Activated CD8-positive, alpha-beta T cell treated with anti-CD3 and anti-CD28 coated beads, Interleukin-2, amount 10 ng/mL, durations not matched to agents 7 days and 5 days (primary cell): ENCODE measurements at regions of chr2 and their contacts with region 1.

Region 1: DNA sequence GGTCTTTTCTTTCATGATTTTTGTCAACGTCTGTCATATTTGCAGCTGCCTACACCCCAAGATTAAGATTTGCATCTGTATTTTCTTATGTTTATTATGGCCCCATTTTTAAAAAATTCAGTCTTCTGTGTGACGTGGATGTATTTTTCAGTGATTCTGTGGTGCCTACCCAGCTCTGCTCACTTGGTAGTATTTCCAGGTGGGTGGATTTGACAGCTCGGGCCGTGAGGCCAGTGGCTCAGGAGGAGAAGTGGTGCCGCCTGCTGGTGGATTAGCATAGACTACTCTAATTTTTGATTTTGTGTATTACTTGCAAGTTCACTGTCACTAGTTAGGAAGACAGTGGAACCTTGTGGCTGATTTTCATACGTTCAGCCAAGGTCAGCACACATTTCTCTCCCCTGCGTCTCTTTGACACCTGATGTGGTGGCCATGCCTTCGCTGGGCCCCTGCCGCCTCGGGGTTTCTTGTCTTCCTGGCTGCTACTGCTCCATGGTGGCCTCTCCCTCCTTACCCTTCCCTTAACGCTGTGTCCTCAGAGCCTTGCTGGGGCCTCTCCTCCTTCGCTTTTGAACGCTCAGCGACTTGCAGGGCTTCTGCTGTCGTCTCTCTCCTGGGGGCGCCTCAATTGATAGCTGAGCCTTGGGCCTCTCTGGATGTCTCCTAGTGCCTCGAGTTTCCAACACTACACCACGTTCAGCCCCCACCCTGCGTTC is 89.3 kb downstream of the DGKD start:
- DNase-seq: peak; percentile 91
- ATAC-seq: peak; percentile 80
- H3K4me3 Mint-ChIP-seq: no peak overlapping the region
- H3K27ac Mint-ChIP-seq: peak overlapping the region; percentile 56
- H3K4me1 Mint-ChIP-seq: peaks cover 33% of the 10 kb centered on the region
- H3K27me3 Mint-ChIP-seq: no peaks in the 10 kb centered on the region

Region 2: DNA sequence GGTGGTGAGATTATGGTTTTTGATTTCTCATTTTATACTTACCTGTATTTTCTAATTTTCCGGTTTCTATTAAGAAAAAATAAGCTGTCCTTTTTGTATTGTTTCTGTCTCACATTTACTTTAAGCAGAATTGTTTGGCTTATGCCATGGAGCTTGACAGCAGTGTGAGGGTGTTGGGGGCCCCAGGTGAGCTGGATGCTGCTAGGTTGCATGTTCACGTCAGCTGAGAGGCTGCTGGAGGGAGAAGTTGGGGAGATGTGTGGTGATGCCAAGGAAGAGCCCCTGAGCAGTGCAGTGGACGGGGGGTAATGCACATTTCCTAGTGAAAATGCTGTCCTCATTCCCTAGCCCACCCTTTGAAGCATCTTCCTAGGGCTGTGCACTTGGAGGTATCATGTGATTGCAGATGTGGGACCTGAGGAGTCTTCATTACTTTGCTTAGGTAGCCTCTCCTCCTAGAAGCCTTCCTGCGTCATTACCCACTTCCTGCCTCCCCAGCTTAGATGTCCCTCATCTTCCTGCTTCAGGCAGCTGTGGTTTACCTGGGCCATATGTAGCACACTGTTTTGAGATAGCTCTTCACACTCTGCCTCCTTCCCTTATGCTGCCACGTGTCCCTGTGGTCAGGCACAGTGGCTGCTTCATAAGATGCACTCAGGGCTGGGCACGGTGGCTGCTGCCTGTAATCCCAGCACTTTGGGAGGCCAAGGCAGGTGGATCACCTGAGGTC is 175.9 kb before region 1 on chr2:
- CTCF ChIA-PET with region 1: interaction called, 18 read pairs
- POLR2A ChIA-PET with region 1: no interaction called
- DNase-seq: peak; percentile 95
- ATAC-seq: peak; percentile 97
- H3K4me3 Mint-ChIP-seq: peak overlapping the region; percentile 65
- H3K27ac Mint-ChIP-seq: peak overlapping the region; percentile 92
- H3K4me1 Mint-ChIP-seq: peaks cover 70% of the 10 kb centered on the region
- H3K27me3 Mint-ChIP-seq: no peaks in the 10 kb centered on the region

Region 3: DNA sequence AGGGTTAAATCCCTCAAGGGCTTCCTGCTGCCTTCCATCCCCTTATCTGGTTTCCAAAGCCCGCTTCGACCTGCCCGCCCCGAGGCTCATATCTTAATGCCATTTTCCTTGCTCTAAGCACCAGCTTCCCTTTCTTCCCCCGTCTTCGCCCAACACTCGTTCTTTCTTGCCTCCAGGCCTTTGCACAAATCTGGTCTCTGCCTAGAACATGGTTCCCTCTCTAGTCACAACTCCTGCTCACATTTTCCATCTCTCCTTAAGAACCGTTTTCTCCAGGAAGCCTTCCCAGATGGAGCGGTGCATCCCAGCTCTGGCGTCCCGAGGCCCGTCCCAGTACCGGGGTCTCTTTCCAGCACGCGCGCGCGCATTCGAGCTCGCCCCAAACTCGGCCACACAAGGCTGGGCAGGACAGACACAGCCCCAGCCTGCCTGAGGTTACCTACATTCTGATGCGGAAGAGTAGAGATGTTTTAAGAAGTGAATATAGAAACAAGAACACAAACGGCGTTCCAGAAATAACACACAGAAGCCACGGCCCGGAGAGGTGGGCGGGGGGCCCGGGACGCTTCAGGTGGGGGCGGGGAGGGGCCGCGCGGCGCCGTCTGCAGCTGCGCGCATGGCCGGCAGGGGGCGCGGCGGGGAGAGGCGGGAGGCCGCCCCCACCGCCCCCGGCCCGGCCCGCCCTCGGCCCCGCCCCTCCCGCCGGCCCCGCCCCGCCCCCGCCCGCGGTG is 89.7 kb before region 1 on chr2 and contains the start of gene DGKD:
- CTCF ChIA-PET with region 1: interaction called, 16 read pairs
- POLR2A ChIA-PET with region 1: interaction called, 3 read pairs
- DNase-seq: peak; percentile 79
- ATAC-seq: peak; percentile 76
- H3K4me3 Mint-ChIP-seq: peak within 1 kb of the TSS; percentile 85
- H3K27ac Mint-ChIP-seq: peak within 1 kb of the TSS; percentile 94
- H3K4me1 Mint-ChIP-seq: peaks cover 82% of the 10 kb centered on the region
- H3K27me3 Mint-ChIP-seq: no peaks in the 10 kb centered on the region
- total RNA-seq, gene DGKD: 92.1 to 94.2 TPM

Region 4: GRCh38 chr2:233409286-233409991 is 34.2 kb before region 1 on chr2:
- CTCF ChIA-PET with region 1: interaction called, 308 read pairs
- POLR2A ChIA-PET with region 1: interaction called, 3 read pairs
- DNase-seq: peak; percentile 62
- ATAC-seq: peak; percentile 90
- H3K4me3 Mint-ChIP-seq: peak overlapping the region; percentile 45
- H3K27ac Mint-ChIP-seq: peak overlapping the region; percentile 81
- H3K4me1 Mint-ChIP-seq: peaks cover 68% of the 10 kb centered on the region
- H3K27me3 Mint-ChIP-seq: no peaks in the 10 kb centered on the region

Region 5: GRCh38 chr2:233426619-233427342 is 16.8 kb before region 1 on chr2:
- CTCF ChIA-PET with region 1: interaction called, 81 read pairs
- POLR2A ChIA-PET with region 1: interaction called, 3 read pairs
- DNase-seq: no peak
- ATAC-seq: no peak
- H3K4me3 Mint-ChIP-seq: no peak overlapping the region
- H3K27ac Mint-ChIP-seq: peak overlapping the region; percentile 3
- H3K4me1 Mint-ChIP-seq: peaks cover 82% of the 10 kb centered on the region
- H3K27me3 Mint-ChIP-seq: no peaks in the 10 kb centered on the region

Region 6: GRCh38 chr2:233656443-233656842 is 212.8 kb after region 1 on chr2:
- CTCF ChIA-PET with region 1: no interaction called
- POLR2A ChIA-PET with region 1: no interaction called
- DNase-seq: no peak
- ATAC-seq: no peak
- H3K4me3 Mint-ChIP-seq: no peak overlapping the region
- H3K27ac Mint-ChIP-seq: no peak overlapping the region
- H3K4me1 Mint-ChIP-seq: no peaks in the 10 kb centered on the region
- H3K27me3 Mint-ChIP-seq: peaks cover 29% of the 10 kb centered on the region

Region 7: GRCh38 chr2:233901367-233901766 is 457.7 kb after region 1 on chr2:
- CTCF ChIA-PET with region 1: no interaction called
- POLR2A ChIA-PET with region 1: no interaction called
- DNase-seq: no peak
- ATAC-seq: no peak
- H3K4me3 Mint-ChIP-seq: no peak overlapping the region
- H3K27ac Mint-ChIP-seq: no peak overlapping the region
- H3K4me1 Mint-ChIP-seq: peaks cover 5% of the 10 kb centered on the region
- H3K27me3 Mint-ChIP-seq: peaks cover 20% of the 10 kb centered on the region